ENCODE measurements at regions of chr10 and their contacts with region 1.

Region 1: GRCh38 chr10:117112220-117112619 is 25.9 kb downstream of the VAX1 start:
- DNase-seq: no peak
- H3K27ac ChIP-seq: no peak overlapping the region
- CTCF ChIP-seq: no peak; the same call in 1 of the 2 replicates

Region 2: DNA sequence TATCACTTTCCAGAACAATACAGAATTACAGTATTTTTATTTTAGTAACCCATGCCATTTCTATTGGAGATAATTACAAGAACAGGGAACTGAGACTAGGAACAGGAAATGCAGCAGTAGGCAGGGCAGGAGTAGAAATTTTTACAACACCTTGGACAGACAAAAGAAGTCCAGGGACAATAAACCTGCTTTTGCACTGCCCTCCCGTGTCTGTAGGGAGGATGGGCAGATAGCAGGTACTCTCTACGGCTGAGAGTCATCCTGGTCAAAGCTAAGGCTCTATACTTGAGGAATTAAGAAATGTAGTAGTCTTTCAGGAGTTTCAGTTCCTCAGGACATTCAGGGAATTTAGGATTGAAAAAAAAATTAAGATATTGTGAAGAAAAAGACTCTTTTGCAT is 37.6 kb before region 1 on chr10:
- CTCF ChIA-PET with region 1: no interaction called
- POLR2A ChIA-PET with region 1: no interaction called
- DNase-seq: peak; percentile 45
- H3K27ac ChIP-seq: no peak overlapping the region
- CTCF ChIP-seq: no peak

Region 3: GRCh38 chr10:117167789-117168674 is 55.8 kb after region 1 on chr10:
- CTCF ChIA-PET with region 1: interaction called, 14 read pairs
- POLR2A ChIA-PET with region 1: no interaction called
- DNase-seq: peak; percentile 83
- H3K27ac ChIP-seq: no peak overlapping the region
- CTCF ChIP-seq: peak; percentile 85

Region 4: DNA sequence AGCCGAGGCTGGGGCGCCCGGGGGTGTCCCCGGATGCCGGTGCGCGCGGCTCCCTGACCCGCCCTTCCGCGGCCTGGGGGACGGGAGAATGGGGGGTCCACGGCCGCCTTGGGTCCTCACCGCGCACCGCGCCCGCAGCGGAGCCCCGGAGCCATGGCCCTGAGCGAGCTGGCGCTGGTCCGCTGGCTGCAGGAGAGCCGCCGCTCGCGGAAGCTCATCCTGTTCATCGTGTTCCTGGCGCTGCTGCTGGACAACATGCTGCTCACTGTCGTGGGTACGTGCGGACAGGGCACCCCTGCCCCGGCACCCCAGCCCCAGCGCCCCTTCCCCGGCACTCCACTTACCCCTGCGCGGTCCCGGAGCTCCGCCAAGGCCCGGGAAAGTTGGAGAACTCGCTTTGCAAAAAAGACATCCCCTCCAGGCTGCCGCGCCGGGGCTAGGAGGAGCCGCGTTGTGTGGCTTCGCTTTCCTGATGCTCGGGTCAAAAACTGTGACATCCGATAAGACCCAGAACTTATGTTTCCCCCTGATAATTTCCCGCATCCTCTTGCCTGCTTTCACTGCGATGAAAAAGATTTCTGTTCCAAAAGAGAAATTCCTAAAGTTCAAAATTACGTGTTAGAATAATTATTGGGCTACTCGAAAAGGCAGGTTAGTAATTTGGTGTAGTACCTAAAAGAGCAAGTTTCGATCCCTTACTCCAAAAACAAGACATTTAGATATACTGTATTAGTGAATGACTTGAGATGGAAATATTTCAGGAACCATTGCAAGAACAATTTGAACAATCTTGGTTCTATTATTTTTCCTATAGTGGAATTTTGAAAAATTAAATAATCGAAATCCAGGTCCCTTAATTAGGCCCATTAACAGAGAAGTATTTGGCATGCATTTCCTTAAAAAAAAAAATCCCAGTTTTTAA is 129.6 kb after region 1 on chr10:
- CTCF ChIA-PET with region 1: no interaction called
- POLR2A ChIA-PET with region 1: no interaction called
- DNase-seq: no peak
- H3K27ac ChIP-seq: no peak overlapping the region
- CTCF ChIP-seq: no peak

Measured in RWPE1 (cell line).